Natural killer cell (primary cell): ENCODE measurements at regions of chr2 and their contacts with region 1.

Region 1: DNA sequence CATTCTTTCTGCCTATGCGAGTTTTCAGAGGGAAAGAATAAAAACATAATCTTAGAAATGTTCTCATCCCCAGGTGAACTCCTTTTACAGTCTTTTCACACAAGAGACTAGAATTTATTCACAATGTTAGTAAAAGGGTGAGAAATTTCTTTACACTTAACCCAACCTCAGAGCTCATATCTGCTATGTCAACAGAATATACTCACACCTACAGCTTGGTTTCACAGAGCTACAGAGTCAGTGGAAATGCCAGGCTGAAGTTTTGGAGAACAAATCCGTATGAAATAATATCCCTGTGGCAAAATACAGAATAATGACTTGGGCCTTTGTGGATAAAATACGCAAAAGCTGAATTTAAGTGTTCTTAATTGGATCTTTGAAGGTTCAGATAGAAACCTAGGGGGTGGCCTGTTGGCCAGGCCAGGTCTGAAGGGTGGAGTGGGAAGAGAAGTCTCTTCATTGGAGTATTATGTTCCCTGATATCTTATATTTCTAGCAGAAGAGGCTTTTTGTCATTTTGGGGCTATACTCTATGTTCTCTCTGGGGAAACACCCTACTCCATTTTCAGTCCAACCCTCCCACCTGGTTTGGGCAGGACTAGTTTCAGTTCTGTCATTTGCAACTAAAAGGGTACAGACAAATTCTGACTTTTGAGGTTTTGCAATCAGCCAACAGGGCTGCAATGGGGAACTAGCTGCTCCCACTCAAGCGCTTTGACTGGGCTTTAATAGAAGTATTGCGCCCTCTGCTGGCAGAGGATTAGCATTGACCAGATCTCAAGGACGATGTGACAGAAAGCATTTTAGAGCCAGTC is 25.7 kb downstream of the FBXO48 start:
- DNase-seq: peak; percentile 71 to 94
- ATAC-seq: peak; percentile 80 to 96 (median 86)
- H3K4me3 ChIP-seq: no peak overlapping the region
- H3K4me3 Mint-ChIP-seq: peak overlapping the region; percentile 85
- H3K27ac ChIP-seq: peak overlapping the region; percentile 95
- H3K27ac Mint-ChIP-seq: peak overlapping the region; percentile 97 to 99
- H3K4me1 ChIP-seq: peaks cover 24% of the 10 kb centered on the region
- H3K4me1 Mint-ChIP-seq: peaks cover 42 to 43% of the 10 kb centered on the region in 2 donors
- H3K27me3 ChIP-seq: no peaks in the 10 kb centered on the region
- H3K27me3 Mint-ChIP-seq: no peaks in the 10 kb centered on the region
- CTCF ChIP-seq: peak; percentile 93

Region 2: DNA sequence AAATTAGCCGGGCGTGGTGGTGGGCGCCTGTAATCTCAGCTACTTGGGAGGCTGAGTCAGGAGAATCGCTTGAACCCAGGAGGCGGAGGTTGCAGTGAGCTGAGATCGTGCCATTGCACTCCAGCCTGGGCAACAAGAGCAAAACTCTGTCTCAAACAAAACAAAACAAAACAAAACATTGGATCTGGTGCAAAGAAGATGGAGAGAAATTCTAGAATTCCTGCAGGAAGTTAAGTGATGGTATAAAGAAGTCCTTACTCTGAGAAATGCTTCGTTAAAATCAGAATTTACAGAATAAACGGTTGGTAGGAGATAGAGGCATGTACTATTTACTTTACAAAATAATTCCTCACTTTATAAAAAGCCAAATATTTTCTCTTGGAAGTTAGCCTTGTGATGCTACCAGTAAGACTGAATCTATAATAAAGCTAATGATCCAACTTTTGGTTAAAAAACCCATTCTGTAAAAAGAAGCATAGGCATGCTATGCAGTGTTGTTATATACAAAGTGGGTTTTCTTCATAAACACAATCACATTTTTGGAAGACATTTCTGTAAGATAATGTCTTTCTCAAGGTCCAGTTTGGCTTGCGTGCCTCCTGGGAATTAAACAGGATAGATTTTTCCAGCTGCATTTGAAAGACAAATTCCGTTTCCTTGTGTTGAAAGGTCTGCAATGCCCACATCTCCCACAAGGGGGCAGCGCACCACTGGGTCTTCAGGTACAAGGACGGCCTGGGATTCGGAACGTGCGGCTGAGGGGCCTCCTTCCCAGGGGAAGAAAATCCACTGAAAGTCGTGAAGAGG is 319.3 kb before region 1 on chr2:
- intact Hi-C with region 1: loop called (anchors 1 kb)
- DNase-seq: peak; percentile 76 to 87
- ATAC-seq: peak; percentile 40 to 52 (median 51)
- H3K4me3 ChIP-seq: no peak overlapping the region
- H3K4me3 Mint-ChIP-seq: peak overlapping the region; percentile 85
- H3K27ac ChIP-seq: no peak overlapping the region
- H3K27ac Mint-ChIP-seq: peak overlapping the region; percentile 92 to 98
- H3K4me1 ChIP-seq: peaks cover 36% of the 10 kb centered on the region
- H3K4me1 Mint-ChIP-seq: peaks cover 39 to 40% of the 10 kb centered on the region in 2 donors
- H3K27me3 ChIP-seq: no peaks in the 10 kb centered on the region
- H3K27me3 Mint-ChIP-seq: no peaks in the 10 kb centered on the region
- CTCF ChIP-seq: peak; percentile 98

Region 3: GRCh38 chr2:68196120-68196716 is 245.2 kb before region 1 on chr2:
- intact Hi-C with region 1: loop called (anchors 10 kb)
- DNase-seq: peak in 1 of 2 donors; percentile 77
- ATAC-seq: peak in 2 of 3 donors; percentile 24 to 57
- H3K4me3 ChIP-seq: no peak overlapping the region
- H3K4me3 Mint-ChIP-seq: no peak overlapping the region
- H3K27ac ChIP-seq: no peak overlapping the region
- H3K27ac Mint-ChIP-seq: peak overlapping the region; percentile 62 to 82
- H3K4me1 ChIP-seq: no peaks in the 10 kb centered on the region
- H3K4me1 Mint-ChIP-seq: peaks cover 53 to 57% of the 10 kb centered on the region in 2 donors
- H3K27me3 ChIP-seq: no peaks in the 10 kb centered on the region
- H3K27me3 Mint-ChIP-seq: no peaks in the 10 kb centered on the region
- CTCF ChIP-seq: peak; percentile 65

Region 4: GRCh38 chr2:68251187-68251854 is 190.1 kb before region 1 on chr2:
- intact Hi-C with region 1: loop called (anchors 1 kb)
- DNase-seq: peak; percentile 62 to 93
- ATAC-seq: peak; percentile 65 to 79 (median 66)
- H3K4me3 ChIP-seq: peak overlapping the region; percentile 80
- H3K4me3 Mint-ChIP-seq: peak overlapping the region; percentile 94
- H3K27ac ChIP-seq: peak overlapping the region; percentile 95
- H3K27ac Mint-ChIP-seq: peak overlapping the region in 1 of 2 donors; percentile 97
- H3K4me1 ChIP-seq: peaks cover 15% of the 10 kb centered on the region
- H3K4me1 Mint-ChIP-seq: peaks cover 28 to 41% of the 10 kb centered on the region in 2 donors
- H3K27me3 ChIP-seq: no peaks in the 10 kb centered on the region
- H3K27me3 Mint-ChIP-seq: peaks cover 0 to 3% of the 10 kb centered on the region in 2 donors
- CTCF ChIP-seq: peak; percentile 69

Region 5: DNA sequence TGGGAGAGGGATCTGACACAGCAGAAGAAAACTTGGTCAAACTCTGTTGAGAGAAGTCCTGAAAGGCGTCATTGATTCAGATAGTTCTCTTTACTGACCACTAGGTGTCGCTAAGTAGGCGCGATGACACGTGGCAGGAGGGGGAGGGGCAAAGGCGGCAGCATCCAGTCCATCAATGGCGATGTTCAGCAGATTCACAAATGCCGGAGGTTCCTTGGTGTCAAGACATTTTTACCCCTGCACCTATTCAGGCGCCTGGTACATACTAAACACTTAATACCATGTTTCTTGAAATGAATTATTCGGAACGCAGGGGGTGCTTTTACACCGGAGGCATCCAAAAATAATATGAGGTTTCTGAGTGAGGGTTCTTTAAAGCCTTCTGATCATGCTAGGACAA is 79.3 kb before region 1 on chr2:
- intact Hi-C with region 1: loop called (anchors 1 kb)
- DNase-seq: peak; percentile 78 to 94
- ATAC-seq: peak; percentile 66 to 88 (median 72)
- H3K4me3 ChIP-seq: peak overlapping the region; percentile 20
- H3K4me3 Mint-ChIP-seq: peak overlapping the region; percentile 94
- H3K27ac ChIP-seq: peak overlapping the region; percentile 84
- H3K27ac Mint-ChIP-seq: peak overlapping the region; percentile 95 to 97
- H3K4me1 ChIP-seq: peaks cover 33% of the 10 kb centered on the region
- H3K4me1 Mint-ChIP-seq: peaks cover 61 to 63% of the 10 kb centered on the region in 2 donors
- H3K27me3 ChIP-seq: no peaks in the 10 kb centered on the region
- H3K27me3 Mint-ChIP-seq: no peaks in the 10 kb centered on the region
- CTCF ChIP-seq: peak; percentile 81

Region 6: DNA sequence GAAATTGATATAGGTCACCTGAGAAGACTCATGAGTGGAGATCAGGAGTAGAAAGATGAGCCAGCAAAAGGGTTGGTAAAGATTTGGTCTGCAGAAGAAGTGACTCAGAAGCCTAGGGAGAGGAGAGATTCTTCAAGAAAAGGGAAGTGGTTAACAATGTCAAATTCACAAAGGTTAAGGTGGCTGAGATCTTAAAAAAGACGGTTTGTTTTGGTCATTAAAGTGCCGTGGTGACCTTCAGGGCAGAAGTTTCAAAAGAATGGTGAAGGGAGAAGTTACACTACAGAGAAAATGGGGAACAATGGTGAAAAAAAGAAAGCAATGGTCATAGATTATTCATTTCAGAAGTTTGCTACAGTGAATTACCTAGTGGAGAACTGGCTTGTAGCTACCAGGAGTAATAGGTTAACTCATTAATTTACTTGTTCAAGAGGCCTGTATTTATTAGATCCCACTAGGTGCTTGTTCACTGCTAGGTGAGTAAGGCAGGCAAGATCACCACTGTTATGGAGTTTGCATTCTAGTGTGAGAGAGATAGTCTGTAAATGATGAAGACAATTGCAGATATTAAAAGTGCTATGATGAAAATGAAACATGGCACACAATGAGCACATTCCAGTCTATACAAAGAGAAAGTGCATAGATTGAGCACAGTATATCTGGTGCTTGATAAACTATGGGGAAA is 17.3 kb before region 1 on chr2:
- intact Hi-C with region 1: loop called (anchors 1 kb)
- DNase-seq: peak in 1 of 2 donors; percentile 50
- ATAC-seq: peak; percentile 76 to 84 (median 82)
- H3K4me3 ChIP-seq: no peak overlapping the region
- H3K4me3 Mint-ChIP-seq: no peak overlapping the region
- H3K27ac ChIP-seq: peak overlapping the region; percentile 67
- H3K27ac Mint-ChIP-seq: no peak overlapping the region
- H3K4me1 ChIP-seq: peaks cover 43% of the 10 kb centered on the region
- H3K4me1 Mint-ChIP-seq: peaks cover 41 to 49% of the 10 kb centered on the region in 2 donors
- H3K27me3 ChIP-seq: no peaks in the 10 kb centered on the region
- H3K27me3 Mint-ChIP-seq: no peaks in the 10 kb centered on the region
- CTCF ChIP-seq: no peak

Region 7: GRCh38 chr2:68452168-68452900 is 10.9 kb after region 1 on chr2:
- intact Hi-C with region 1: no loop called
- DNase-seq: peak in 1 of 2 donors; percentile 58
- ATAC-seq: peak; percentile 62 to 79 (median 63)
- H3K4me3 ChIP-seq: no peak overlapping the region
- H3K4me3 Mint-ChIP-seq: peak overlapping the region; percentile 21
- H3K27ac ChIP-seq: peak overlapping the region; percentile 25
- H3K27ac Mint-ChIP-seq: peak overlapping the region; percentile 19 to 82
- H3K4me1 ChIP-seq: peaks cover 6% of the 10 kb centered on the region
- H3K4me1 Mint-ChIP-seq: peaks cover 9 to 18% of the 10 kb centered on the region in 2 donors
- H3K27me3 ChIP-seq: no peaks in the 10 kb centered on the region
- H3K27me3 Mint-ChIP-seq: no peaks in the 10 kb centered on the region
- CTCF ChIP-seq: no peak

Region 8: DNA sequence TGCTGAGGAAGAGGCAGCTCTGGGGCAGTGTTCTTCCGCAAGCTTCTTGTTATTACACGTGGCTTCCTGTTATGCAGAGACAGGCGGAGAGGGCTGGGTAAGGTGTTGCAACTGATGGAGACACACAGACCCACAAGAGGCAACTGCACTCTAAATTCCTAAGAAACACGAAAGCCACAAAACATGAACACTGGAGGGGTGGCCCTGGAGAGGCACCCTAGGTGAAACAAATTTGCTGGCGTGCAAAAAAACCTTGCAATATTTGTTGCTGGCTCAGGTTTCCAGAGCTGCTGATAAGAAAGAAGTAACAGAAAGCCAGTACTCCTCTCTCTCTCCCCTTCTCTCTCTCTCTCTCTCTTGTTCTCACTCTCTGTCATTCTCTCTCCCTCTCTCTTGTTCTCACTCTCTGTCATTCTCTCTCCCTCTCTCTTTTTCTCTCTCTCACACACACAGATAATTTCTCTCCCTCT is 325.0 kb after region 1 on chr2:
- intact Hi-C with region 1: no loop called
- DNase-seq: peak; percentile 66 to 88
- ATAC-seq: peak; percentile 56 to 84 (median 76)
- H3K4me3 ChIP-seq: peak overlapping the region; percentile 6
- H3K4me3 Mint-ChIP-seq: peak overlapping the region; percentile 81
- H3K27ac ChIP-seq: peak overlapping the region; percentile 96
- H3K27ac Mint-ChIP-seq: peak overlapping the region in 1 of 2 donors; percentile 93
- H3K4me1 ChIP-seq: peaks cover 79% of the 10 kb centered on the region
- H3K4me1 Mint-ChIP-seq: peaks cover 92 to 98% of the 10 kb centered on the region in 2 donors
- H3K27me3 ChIP-seq: no peaks in the 10 kb centered on the region
- H3K27me3 Mint-ChIP-seq: peaks cover 0 to 4% of the 10 kb centered on the region in 2 donors
- CTCF ChIP-seq: no peak